OCI-LY7 (cell line): ENCODE measurements at regions of chr17 and their contacts with region 1.

Region 1: GRCh38 chr17:28612936-28613872 is 781 bp downstream of the RSKR start:
- DNase-seq: peak; percentile 55
- H3K4me3 ChIP-seq: no peak overlapping the region
- H3K27ac ChIP-seq: peak overlapping the region; percentile 31
- H3K4me1 ChIP-seq: peaks cover 23% of the 10 kb centered on the region
- CTCF ChIP-seq: peak; percentile 83

Region 2: DNA sequence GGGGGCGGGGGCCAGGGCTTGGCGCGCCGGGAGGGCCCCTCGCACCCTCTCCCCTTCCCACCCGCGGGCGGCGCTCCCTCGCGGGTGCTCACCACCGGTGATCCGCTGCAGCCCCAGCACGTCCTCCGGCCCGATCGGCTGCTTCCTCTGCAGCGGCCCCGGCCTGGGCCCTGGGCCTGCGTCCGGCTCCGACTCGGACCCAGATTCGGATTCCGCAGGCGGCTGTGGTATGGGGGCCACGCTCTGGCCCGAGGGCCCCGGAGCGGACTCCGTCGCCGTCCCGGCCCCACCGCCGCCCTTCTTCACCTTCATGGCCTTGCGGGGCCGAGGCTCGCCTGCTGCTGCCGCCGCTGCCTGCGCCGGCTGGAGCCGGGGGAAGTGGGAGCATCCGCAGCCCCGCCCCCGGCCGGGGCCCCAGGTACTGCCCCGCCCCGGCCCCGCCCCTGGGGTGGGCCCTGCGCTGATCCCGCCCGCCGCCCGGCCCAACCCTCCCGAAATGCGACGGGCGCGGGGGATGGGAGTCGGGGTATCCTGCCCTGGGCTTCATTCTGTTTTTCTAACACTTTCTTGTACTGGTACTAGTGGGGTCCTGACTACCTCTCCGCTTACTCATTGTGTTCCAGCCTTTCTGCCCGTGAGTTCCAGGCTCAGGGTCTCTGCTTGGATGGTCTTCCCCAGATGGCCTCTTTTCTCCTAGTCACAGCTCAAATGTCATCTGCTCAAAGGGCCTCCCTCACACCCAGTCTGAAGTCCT is 60.8 kb before region 1 on chr17 and contains the start of gene UNC119:
- CTCF ChIA-PET with region 1: no interaction called
- POLR2A ChIA-PET with region 1: no interaction called
- intact Hi-C with region 1: loop called (anchors 5 kb)
- DNase-seq: peak; percentile 86
- H3K4me3 ChIP-seq: peak within 1 kb of the TSS; percentile 73
- H3K27ac ChIP-seq: no peak within 1 kb of the TSS
- H3K4me1 ChIP-seq: peaks cover 26% of the 10 kb centered on the region
- CTCF ChIP-seq: no peak
- total RNA-seq, gene UNC119: 10.5 and 14.2 TPM in 2 replicates

Region 3: DNA sequence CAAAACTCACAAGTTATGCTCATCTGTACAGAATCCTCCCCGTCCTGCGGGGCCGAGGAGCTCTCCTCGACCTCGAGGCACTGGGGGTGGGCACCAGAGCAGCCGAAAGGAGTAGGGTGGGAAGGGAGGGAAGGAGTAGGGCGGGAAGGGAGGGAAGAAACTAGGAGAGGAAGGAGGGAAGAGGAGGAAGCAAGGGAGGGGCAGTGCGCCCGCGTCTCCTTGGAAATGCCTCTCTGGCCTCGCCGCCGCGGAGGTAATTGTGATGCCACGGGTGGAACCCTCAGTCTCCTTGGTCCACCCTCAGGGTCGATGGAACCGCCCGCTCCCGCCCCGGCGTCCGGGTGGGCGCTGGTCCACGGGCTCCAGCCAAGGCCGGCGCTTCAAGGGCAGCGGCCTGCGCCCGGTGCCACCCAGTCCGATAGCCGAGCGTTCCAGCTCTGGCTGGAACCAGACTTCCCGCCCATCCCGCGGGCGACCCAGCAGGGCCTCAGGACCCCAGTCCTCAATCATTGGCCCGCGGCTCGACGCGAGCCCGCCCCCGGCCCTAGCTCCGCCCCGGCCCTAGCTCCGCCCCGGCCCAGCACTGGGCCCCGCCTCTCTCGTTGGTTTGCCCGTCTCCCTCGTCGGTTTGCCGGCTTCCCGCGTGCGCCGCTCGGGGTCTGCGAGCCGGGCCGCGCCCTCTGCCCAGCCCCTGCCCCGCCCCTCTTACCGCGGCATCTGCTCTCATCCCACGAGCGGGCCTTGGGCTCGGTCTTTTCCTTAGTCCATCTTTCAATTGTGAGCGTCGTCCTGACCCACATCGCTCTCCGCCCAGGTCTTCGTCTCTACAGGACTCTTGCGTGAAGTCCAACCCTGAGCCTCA is 97.9 kb after region 1 on chr17:
- CTCF ChIA-PET with region 1: no interaction called
- POLR2A ChIA-PET with region 1: interaction called, 11 read pairs
- intact Hi-C with region 1: no loop called
- DNase-seq: peak; percentile 85
- H3K4me3 ChIP-seq: peak overlapping the region; percentile 68
- H3K27ac ChIP-seq: peak overlapping the region; percentile 27
- H3K4me1 ChIP-seq: peaks cover 27% of the 10 kb centered on the region
- CTCF ChIP-seq: no peak

Region 4: DNA sequence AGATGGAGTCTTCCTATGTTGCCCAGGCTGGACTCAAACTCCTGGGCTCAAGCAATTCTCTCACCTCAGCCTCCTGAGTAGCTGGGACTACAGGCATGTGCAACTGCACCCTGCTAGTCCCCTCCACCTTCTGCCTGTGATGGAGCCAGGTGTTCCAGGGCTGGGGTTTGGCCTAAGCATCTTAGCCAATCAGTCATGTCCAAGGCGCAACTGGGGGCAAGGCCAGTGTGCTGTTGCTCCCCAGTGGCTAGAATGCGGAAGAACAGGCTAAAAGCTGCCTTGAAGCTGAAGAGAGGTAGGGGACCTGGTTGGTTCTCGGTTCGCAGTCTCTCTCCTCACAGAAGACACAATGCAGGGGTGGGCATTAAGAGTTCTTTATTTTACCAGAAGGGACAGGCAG is 265.8 kb after region 1 on chr17:
- CTCF ChIA-PET with region 1: no interaction called
- POLR2A ChIA-PET with region 1: no interaction called
- intact Hi-C with region 1: no loop called
- DNase-seq: peak; percentile 68
- H3K4me3 ChIP-seq: no peak overlapping the region
- H3K27ac ChIP-seq: no peak overlapping the region
- H3K4me1 ChIP-seq: no peaks in the 10 kb centered on the region
- CTCF ChIP-seq: peak; percentile 66

Region 5: DNA sequence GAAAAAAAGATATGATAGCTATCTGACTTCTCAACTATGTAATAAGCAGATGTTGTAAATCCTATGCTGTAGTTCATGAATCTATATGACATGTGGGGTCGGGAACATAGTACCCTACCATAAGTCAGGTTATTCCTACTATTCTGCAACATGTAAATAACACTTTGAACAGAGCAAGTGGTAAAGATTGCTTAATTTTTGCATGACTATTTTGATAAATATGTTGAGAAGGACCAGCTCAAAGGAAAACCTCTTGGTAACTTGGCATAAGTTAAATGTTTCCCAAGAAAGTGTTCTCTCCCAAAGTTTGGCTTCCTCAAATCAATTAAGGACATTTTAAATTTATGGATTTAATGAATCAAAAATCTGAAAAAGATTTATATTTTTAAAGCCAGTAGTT is 891.5 kb after region 1 on chr17:
- CTCF ChIA-PET with region 1: no interaction called
- POLR2A ChIA-PET with region 1: interaction called, 12 read pairs
- intact Hi-C with region 1: no loop called
- DNase-seq: no peak
- H3K4me3 ChIP-seq: no peak overlapping the region
- H3K27ac ChIP-seq: no peak overlapping the region
- H3K4me1 ChIP-seq: peaks cover 17% of the 10 kb centered on the region
- CTCF ChIP-seq: no peak